Activated naive CD4-positive, alpha-beta T cell treated with anti-CD3 and anti-CD28 coated beads for 36 hours (primary cell): ENCODE measurements at regions of chr6 and their contacts with region 1.

Region 1: DNA sequence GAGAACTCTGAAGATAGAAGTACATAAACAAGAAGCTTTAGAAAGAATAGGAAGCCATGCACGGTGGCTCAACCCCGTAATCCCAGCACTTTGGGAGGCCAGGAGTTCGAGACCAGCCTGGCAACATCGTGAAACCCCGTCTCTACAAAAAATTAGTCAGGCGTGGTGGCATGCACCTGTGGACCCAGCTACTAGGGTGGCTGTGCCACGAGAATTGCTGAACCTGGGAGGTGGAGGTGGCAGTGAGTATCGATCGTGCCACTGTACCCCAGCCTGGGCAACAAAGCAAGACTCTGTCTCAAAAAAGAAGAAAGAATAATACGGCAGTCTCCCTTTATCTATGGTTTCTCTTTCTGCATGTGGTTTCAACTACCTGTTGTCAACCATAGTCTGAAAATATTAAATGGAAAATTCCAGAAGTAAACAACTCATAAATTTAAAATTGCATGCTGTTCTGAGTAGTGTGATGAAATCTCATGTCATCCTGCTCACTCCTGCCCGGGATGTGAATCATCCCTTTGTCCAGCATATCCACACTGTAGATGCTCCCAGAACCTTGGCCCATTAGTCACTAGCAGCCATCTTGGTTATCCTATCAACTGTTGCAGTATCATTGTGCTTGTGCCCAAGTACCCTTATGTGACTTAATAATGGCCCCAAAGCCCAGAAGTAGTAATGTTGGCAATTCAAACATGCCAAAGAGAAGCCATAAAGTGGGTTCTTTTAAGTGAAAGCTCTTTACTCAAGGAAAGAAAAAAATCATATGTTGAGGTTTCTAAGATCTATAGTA is 22.1 kb downstream of the DEK start:
- DNase-seq: no peak
- H3K4me3 Mint-ChIP-seq: peak overlapping the region; percentile 42
- H3K27ac Mint-ChIP-seq: no peak overlapping the region
- H3K4me1 Mint-ChIP-seq: peaks cover 50% of the 10 kb centered on the region
- H3K27me3 Mint-ChIP-seq: no peaks in the 10 kb centered on the region

Region 2: GRCh38 chr6:17700421-17701416 is 541.5 kb before region 1 on chr6:
- CTCF ChIA-PET with region 1: no interaction called
- intact Hi-C with region 1: loop called (anchors 5 kb)
- DNase-seq: no peak
- H3K4me3 Mint-ChIP-seq: no peak overlapping the region
- H3K27ac Mint-ChIP-seq: peak overlapping the region; percentile 18
- H3K4me1 Mint-ChIP-seq: peaks cover 56% of the 10 kb centered on the region
- H3K27me3 Mint-ChIP-seq: no peaks in the 10 kb centered on the region

Region 3: DNA sequence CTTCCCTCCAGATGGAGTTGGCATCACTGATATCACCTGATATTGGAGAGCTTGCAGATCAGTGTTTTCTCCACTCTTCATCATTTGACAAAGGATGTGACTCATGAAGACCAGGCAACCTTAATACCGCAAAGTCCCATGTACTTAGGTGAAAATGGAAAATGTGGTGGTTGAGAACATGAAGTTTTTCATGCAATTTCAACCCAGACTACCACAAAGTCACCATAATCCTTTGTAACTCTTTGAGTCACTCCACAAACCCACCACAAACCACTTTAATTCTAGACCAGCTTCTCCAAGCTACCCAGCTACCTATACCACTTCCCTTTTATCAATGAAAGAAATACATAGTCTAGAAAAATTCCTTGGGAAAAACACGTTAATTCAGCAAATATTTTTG is 126.9 kb before region 1 on chr6:
- CTCF ChIA-PET with region 1: no interaction called
- intact Hi-C with region 1: no loop called
- DNase-seq: peak; percentile 20
- H3K4me3 Mint-ChIP-seq: no peak overlapping the region
- H3K27ac Mint-ChIP-seq: no peak overlapping the region
- H3K4me1 Mint-ChIP-seq: peaks cover 10% of the 10 kb centered on the region
- H3K27me3 Mint-ChIP-seq: peaks cover 34% of the 10 kb centered on the region